ENCODE measurements at regions of chr7 and their contacts with region 1.

Region 1: GRCh38 chr7:99997545-99998137 is 17.8 kb upstream of the ZKSCAN1 start:
- DNase-seq: peak; percentile 85
- H3K4me3 Mint-ChIP-seq: peak overlapping the region; percentile 60
- H3K27ac Mint-ChIP-seq: peak overlapping the region; percentile 71
- H3K4me1 Mint-ChIP-seq: peaks cover 33% of the 10 kb centered on the region
- H3K27me3 Mint-ChIP-seq: peaks cover 3% of the 10 kb centered on the region

Region 2: GRCh38 chr7:99918959-99919813 is 78.5 kb before region 1 on chr7 and contains the start of gene TRIM4:
- CTCF ChIA-PET with region 1: interaction called, 138 read pairs
- POLR2A ChIA-PET with region 1: interaction called, 8 read pairs
- DNase-seq: peak; percentile 93
- H3K4me3 Mint-ChIP-seq: peak within 1 kb of the TSS; percentile 96
- H3K27ac Mint-ChIP-seq: peak within 1 kb of the TSS; percentile 96
- H3K4me1 Mint-ChIP-seq: peaks cover 53% of the 10 kb centered on the region
- H3K27me3 Mint-ChIP-seq: no peaks in the 10 kb centered on the region
- total RNA-seq, gene TRIM4: 28.9 to 29.5 TPM

Region 3: DNA sequence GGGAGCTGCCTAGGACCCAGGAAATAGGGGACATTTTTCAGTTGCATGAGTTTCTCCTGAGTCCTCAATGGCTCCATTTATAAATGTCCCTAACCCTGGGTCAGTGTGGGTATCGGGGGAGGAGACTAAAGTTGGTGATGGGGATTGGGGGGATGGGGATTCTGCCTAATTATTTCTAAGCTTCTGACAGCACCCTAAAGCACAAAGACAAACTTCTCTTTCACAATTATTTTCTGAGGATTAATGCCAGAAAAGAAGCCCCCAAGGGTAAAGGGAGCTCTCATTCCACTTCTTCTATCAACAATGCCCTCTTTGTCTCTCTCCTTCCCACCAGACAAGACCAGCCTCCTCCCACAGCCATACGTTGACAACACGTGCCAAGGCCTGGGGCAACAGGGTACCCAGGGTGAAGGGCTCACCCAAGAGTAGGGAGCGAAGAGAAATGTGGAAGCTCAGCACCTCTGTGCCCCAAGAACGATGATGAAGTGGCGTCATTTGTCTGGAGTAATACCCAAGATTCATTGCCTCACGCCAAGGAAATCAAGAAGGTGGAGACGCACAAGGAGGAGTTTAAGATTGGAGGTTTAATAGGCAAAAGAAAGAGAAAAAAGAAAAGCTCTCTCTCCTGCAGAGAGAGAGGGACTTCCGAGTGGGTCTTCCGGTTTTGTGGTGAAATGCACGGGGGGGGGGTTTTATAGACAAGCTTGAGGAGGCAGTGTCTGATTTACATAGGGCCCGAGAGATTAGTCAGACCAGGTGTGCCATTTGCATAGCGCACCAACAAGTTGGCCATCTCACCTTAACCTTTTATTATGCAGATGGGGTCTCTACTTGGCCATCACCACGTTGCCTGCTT is 53.8 kb before region 1 on chr7:
- CTCF ChIA-PET with region 1: no interaction called
- POLR2A ChIA-PET with region 1: no interaction called
- DNase-seq: no peak
- H3K4me3 Mint-ChIP-seq: no peak overlapping the region
- H3K27ac Mint-ChIP-seq: no peak overlapping the region
- H3K4me1 Mint-ChIP-seq: peaks cover 3% of the 10 kb centered on the region
- H3K27me3 Mint-ChIP-seq: peaks cover 30% of the 10 kb centered on the region

Region 4: DNA sequence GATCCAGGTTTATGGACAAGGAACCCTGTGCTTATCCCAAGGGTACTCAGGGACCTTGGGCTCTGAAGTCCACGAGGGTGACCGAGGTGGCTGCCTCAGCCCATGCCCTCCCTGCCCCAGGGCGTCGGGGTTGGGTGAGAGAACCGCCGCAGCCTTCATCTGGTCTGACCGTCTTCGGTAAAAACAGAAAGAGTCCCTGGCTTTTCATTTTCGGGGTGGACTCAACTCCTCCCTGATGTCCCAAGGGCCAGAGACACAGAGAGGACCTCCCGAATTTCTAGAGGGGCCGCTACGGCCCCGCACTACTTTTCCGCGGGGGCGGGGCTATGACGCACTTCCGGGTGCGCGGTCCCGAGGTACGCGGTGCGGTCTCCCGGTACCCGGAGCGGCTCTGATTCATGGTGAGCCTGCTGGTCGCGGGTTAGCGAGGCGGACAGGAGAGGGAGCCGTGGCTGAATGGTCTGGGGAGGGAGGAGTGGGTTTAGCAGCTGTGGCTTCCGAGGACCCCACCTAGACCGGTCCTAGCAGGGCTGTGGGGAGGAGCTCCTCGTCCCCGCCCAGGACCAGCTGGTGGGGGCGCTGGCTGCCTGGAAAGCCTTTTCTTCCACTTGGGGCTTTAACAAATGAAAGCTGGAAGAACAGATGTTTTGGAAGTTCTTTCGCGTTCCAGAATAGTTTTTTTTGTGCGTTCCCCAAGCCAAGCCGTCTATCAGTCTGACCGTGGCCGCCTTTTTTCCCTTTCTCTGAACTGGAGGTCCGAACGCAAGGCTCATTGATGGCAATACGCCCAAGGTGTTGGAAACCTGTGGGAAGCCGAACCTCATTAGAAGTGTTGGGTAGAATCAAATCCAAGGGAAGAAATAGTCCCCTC is 52.0 kb after region 1 on chr7 and contains the start of gene ZSCAN21:
- CTCF ChIA-PET with region 1: interaction called, 26 read pairs
- POLR2A ChIA-PET with region 1: interaction called, 8 read pairs
- DNase-seq: peak; percentile 81
- H3K4me3 Mint-ChIP-seq: peak within 1 kb of the TSS; percentile 85
- H3K27ac Mint-ChIP-seq: peak within 1 kb of the TSS; percentile 80
- H3K4me1 Mint-ChIP-seq: peaks cover 17% of the 10 kb centered on the region
- H3K27me3 Mint-ChIP-seq: peaks cover 3% of the 10 kb centered on the region
- total RNA-seq, gene ZSCAN21: 6.9 TPM

Region 5: DNA sequence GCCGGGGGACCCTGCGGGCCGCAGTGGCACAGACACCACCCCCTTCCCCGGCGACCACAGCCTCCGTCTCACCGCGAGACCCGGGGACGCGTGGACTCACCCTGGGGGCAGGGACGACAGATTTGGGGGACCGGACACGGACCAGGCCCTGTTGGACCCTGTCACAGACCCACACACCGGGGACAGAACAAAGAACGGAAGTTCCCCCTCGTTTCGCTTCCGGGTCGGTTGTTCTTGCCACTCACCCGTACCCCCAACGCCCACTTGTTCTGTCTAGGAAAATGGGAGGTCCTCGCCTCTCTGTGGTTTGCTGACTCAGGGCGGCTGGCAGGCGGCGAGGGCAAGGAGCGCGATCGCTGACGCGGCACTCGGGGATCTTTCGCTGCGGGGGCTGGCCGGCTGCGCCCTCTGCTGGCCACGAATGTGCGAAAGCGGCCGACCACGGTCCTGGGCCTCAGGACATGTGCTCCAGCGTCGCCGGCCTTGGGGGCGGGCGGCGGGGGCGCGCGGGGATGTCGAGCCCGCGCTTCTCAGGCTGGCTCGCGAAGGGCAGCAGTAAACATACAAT is 84.0 kb after region 1 on chr7 and contains the start of gene ZNF3:
- CTCF ChIA-PET with region 1: interaction called, 12 read pairs
- POLR2A ChIA-PET with region 1: no interaction called
- DNase-seq: peak; percentile 98
- H3K4me3 Mint-ChIP-seq: peak within 1 kb of the TSS; percentile 81
- H3K27ac Mint-ChIP-seq: peak within 1 kb of the TSS; percentile 79
- H3K4me1 Mint-ChIP-seq: peaks cover 33% of the 10 kb centered on the region
- H3K27me3 Mint-ChIP-seq: peaks cover 3% of the 10 kb centered on the region
- total RNA-seq, gene ZNF3: 21.1 to 22.1 TPM

Measured in activated CD4-positive, alpha-beta memory T cell treated with anti-CD3 and anti-CD28 coated beads, Interleukin-2, amount 10 ng/mL, durations not matched to agents 7 days and 5 days (primary cell).